ENCODE measurements at regions of chr7 and their contacts with region 1.

Region 1: DNA sequence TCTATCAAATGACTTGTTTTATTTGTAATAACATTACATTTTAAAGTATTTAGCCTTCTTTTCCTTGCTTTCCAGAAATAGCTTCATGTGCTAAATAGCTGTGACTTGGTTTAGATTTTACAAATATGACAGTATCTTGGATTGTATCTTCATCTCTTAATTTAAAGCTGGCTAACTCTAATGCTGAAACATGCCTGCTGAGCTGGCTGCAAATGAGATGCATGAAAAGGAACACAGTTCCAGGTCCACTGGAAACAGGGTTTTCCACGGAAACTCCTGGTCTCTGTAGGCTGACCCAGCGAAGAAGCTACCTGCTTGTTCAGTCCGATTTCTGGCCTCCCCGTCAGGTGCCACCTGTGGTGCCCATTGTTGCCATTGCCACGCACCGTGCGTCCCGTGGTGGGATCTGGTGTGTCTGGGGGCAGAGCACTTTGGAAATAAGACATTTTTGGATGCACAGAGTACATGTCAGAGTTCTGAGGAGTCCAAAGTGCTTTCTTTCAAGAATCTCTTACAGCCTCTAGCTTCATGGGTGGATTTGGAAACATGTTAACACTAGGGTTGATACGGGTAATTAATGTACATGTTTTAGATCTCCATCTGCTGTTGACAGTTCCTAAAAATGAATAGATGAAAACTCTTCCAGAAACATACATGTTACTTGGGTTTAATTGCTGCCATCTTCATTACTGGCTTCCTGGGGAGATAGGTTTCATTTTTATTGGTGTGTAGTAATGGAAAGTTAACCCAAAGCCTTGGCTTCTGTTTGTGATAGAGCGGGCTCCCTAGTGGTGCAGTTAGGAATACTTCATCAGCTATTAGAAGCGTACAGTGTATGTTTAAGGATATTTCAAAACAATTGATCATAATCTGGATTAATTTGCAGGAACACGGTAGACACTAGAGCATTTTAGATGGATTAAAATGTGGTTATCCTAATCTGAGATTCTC is 45.0 kb downstream of the SHH start:
- DNase-seq: no peak
- ATAC-seq: no peak
- H3K4me3 ChIP-seq: no peak overlapping the region
- H3K4me3 Mint-ChIP-seq: no peak overlapping the region
- H3K27ac ChIP-seq: no peak overlapping the region
- H3K27ac Mint-ChIP-seq: no peak overlapping the region
- H3K4me1 ChIP-seq: peaks cover 26% of the 10 kb centered on the region in 2 experiments
- H3K4me1 Mint-ChIP-seq: peaks cover 32 to 38% (median 33%) of the 10 kb centered on the region in 3 donors
- H3K27me3 ChIP-seq: no peaks in the 10 kb centered on the region
- H3K27me3 Mint-ChIP-seq: no peaks in the 10 kb centered on the region

Region 2: DNA sequence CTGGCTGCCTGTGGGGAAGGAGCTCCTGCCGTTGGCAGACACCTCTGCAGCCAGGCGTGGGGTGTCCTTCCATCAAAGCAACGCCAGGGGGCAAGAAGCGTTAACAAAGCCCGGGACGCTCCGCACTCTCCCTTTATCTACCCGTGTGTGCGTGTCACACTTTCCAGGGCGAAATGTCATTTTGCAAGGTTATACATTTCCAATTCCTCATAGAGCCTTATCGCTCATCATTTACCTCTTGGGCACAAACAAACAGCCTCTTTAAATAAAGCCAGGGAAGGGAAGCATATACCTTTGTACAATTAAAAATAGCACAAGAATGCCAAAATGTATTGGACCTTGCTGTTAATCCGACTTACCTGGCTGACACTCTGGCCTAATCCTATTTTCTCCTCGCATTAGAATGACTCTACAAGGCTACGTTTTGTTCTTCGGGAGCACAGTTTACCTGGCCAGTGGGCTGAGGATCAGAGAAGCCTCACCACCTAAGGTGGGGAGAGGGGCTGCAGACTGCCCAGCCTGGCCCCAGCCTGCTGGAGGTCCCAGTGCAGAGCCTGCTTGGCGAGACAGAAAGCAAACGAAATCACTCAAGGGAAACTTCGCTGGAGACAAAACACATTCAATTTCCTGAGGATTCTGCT is 386.9 kb before region 1 on chr7:
- CTCF ChIA-PET with region 1: interaction called, 5 to 10 read pairs
- POLR2A ChIA-PET with region 1: no interaction called
- DNase-seq: peak in 33 of 35 experiments; percentile 6 to 70 (median 52)
- ATAC-seq: peak; percentile 78 to 83 (median 80)
- H3K4me3 ChIP-seq: no peak overlapping the region
- H3K4me3 Mint-ChIP-seq: peak overlapping the region in 2 of 3 donors; percentile 13
- H3K27ac ChIP-seq: no peak overlapping the region
- H3K27ac Mint-ChIP-seq: peak overlapping the region in 1 of 2 donors; percentile 53
- H3K4me1 ChIP-seq: peaks cover 0 to 24% of the 10 kb centered on the region in 2 experiments
- H3K4me1 Mint-ChIP-seq: peaks cover 30 to 46% (median 30%) of the 10 kb centered on the region in 3 donors
- H3K27me3 ChIP-seq: peaks cover 35 to 79% of the 10 kb centered on the region in 2 experiments
- H3K27me3 Mint-ChIP-seq: peaks cover 66 to 88% of the 10 kb centered on the region in 2 donors

Region 3: GRCh38 chr7:155733582-155734444 is 33.4 kb before region 1 on chr7:
- CTCF ChIA-PET with region 1: no interaction called
- POLR2A ChIA-PET with region 1: no interaction called
- DNase-seq: no peak
- ATAC-seq: peak; percentile 27 to 82 (median 65)
- H3K4me3 ChIP-seq: no peak overlapping the region
- H3K4me3 Mint-ChIP-seq: peak overlapping the region in 1 of 3 donors; percentile 15
- H3K27ac ChIP-seq: no peak overlapping the region
- H3K27ac Mint-ChIP-seq: peak overlapping the region; percentile 60 to 71
- H3K4me1 ChIP-seq: peaks cover 6 to 24% of the 10 kb centered on the region in 2 experiments
- H3K4me1 Mint-ChIP-seq: peaks cover 57 to 71% (median 70%) of the 10 kb centered on the region in 3 donors
- H3K27me3 ChIP-seq: no peaks in the 10 kb centered on the region
- H3K27me3 Mint-ChIP-seq: no peaks in the 10 kb centered on the region

Region 4: DNA sequence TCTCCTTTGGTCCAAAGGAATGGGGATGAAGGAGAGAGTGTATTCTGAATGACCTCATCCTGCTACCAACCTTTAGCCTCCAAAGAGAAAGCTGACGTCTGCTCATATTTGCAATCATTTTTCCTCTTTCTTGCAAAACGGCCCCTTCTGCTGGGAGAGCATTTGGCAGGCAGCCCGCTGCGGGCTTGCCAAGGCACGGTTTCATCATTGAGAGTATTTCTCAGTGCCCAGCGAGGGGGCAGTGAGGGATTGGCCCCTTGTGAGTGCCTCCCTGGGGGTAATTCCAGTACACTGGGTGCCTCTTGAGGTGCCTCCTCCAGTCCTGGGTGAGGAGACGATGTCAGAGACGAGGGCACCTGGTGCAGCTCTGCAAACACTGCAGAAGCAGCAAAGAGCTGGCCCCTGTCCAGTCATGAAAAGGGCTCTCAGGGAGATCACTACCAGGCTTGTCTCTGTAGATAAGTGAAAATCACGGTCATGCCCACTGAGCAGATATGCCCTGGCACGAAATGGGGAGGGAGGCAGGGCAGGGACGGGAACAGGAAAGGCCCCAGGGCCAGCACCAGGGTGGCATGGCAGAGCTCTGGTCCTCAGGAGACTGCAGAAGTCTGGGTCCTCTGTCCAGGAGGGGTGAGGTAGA is 93.7 kb after region 1 on chr7:
- CTCF ChIA-PET with region 1: no interaction called
- POLR2A ChIA-PET with region 1: no interaction called
- DNase-seq: no peak
- ATAC-seq: no peak
- H3K4me3 ChIP-seq: no peak overlapping the region
- H3K4me3 Mint-ChIP-seq: no peak overlapping the region
- H3K27ac ChIP-seq: no peak overlapping the region
- H3K27ac Mint-ChIP-seq: no peak overlapping the region
- H3K4me1 ChIP-seq: no peaks in the 10 kb centered on the region
- H3K4me1 Mint-ChIP-seq: no peaks in the 10 kb centered on the region
- H3K27me3 ChIP-seq: peaks cover 2 to 40% of the 10 kb centered on the region in 2 experiments
- H3K27me3 Mint-ChIP-seq: peaks cover 8 to 19% of the 10 kb centered on the region in 2 donors